Activated T-helper 1 cell treated with anti-CD3 and anti-CD28 coated beads, Interleukin-12 subunit alpha, Interleukin-12 subunit beta, Interleukin-2, Interleukin-4 antibody, amounts not matched to agents 30 ng/mL and 10 ng/mL and 1 ng/mL, durations not matched to agents 14 hours and 24 hours and 36 hours (primary cell): ENCODE measurements at regions of chr15 and their contacts with region 1.

Region 1: GRCh38 chr15:59917504-59918157 is 86.5 kb upstream of the FOXB1 start:
- DNase-seq: peak; percentile 67
- H3K4me3 Mint-ChIP-seq: no peak overlapping the region
- H3K27ac Mint-ChIP-seq: peak overlapping the region; percentile 1
- H3K4me1 Mint-ChIP-seq: peaks cover 27% of the 10 kb centered on the region
- H3K27me3 Mint-ChIP-seq: peaks cover 32% of the 10 kb centered on the region

Region 2: DNA sequence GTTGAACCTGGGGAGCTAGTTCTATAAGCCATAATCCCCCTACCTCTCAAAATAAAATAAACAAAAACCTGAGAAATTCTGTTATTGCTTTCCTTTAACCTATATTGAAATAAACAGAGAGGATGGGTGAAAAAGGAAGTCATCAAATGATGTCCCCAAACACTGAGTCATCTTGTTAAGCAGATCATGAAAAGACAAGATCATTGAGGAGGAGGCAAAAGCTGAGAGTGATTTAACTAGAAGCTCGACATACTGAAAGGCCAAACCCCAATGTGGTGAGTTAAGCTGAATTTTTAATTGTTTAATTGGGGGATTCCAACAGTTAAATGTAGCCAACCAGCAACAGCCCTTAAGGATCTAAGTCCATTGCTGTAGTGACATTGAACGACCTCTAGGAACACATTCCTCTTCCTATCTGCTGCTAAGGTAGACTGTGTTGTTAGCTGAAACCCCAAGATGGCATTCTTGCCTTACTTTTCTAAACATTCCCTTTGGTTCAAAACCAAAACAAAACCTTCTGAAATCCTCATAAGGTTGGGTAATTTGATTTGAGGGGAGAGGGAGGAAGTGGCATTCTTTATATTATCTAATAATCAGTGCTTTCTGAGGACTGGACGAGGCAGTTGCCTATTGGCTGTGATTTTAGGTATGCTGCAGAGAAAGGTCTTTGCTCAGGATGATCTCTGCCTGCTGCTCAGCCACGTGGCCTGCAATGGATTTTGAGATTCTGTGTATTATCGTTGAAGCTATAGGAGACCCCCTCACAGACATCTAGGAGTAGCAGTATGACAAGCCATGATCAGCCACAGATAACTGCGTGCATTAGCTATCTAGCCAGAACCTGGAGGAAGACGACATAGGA is 165.8 kb before region 1 on chr15:
- intact Hi-C with region 1: loop called (anchors 2 kb)
- DNase-seq: no peak
- H3K4me3 Mint-ChIP-seq: no peak overlapping the region
- H3K27ac Mint-ChIP-seq: no peak overlapping the region
- H3K4me1 Mint-ChIP-seq: peaks cover 5% of the 10 kb centered on the region
- H3K27me3 Mint-ChIP-seq: peaks cover 12% of the 10 kb centered on the region

Region 3: GRCh38 chr15:59997070-59997701 is 79.6 kb after region 1 on chr15:
- intact Hi-C with region 1: loop called (anchors 1 kb)
- DNase-seq: peak; percentile 63
- H3K4me3 Mint-ChIP-seq: peak overlapping the region; percentile 79
- H3K27ac Mint-ChIP-seq: peak overlapping the region; percentile 27
- H3K4me1 Mint-ChIP-seq: peaks cover 73% of the 10 kb centered on the region
- H3K27me3 Mint-ChIP-seq: peaks cover 86% of the 10 kb centered on the region

Region 4: DNA sequence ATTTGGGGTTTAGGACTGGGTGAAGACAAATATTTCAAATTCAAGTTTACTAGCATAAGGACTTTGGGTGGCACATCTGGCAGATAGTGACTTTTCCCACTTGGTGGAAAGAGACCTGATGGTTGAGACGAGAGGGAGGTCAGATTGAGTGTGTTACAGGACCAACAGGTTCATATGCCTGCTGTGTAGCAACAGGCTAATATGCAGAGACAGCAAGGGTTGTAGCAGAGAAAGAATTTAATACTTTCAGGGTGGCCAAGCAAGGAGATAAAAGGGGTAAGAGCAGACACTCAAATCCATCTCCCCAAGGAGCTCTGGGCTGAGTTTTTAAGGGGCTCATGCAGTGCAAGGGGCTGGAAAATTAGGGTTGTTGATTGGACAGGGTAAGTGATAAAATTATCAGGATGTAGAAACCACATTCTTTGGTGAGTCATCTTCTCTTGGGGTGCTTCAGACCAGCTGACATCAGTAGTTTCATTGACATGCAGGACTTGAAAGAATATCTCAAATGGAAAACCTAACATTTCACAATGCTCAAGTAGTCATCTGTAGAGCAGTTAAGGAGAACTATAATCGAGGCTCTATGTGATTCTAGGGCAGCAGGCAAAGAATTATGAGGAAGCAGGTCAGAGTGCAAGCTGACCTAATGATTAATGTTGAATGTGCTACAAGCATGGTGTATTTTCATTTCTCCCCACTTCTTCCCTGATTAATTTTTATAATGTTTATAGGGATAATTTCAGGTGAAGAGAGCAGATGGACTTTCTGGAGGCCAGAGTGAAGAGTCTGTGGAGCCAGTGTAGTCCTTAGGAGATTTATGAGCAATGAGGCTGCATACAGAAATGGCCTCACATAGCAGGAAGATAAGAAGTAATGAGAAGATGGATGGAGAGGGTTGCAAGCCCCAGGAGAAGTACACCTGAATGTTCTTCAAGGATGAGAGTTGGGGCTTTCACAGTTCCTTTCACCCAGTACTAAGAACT is 100.2 kb after region 1 on chr15:
- intact Hi-C with region 1: no loop called
- DNase-seq: no peak
- H3K4me3 Mint-ChIP-seq: peak overlapping the region; percentile 4
- H3K27ac Mint-ChIP-seq: peak overlapping the region; percentile 30
- H3K4me1 Mint-ChIP-seq: peaks cover 19% of the 10 kb centered on the region
- H3K27me3 Mint-ChIP-seq: peaks cover 14% of the 10 kb centered on the region

Region 5: DNA sequence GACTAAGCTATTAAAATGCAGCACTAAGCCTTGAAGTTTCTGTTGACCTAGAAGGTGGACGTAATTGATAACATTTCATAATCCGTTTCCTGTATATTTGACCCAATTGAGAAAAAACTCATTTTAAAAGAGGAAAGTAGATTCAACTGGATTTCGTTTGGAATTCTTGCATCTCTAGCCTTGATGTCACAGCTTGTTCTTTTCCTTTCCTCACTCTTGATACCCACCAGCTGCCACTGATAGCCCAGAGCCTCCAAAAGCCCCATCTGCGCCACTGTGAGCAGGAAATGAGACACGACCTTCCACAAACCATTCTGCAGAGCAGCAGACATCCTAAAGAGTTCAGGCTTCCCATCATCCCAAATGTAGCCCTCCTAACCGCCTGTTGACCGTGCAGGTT is 148.3 kb after region 1 on chr15:
- intact Hi-C with region 1: no loop called
- DNase-seq: no peak
- H3K4me3 Mint-ChIP-seq: no peak overlapping the region
- H3K27ac Mint-ChIP-seq: no peak overlapping the region
- H3K4me1 Mint-ChIP-seq: no peaks in the 10 kb centered on the region
- H3K27me3 Mint-ChIP-seq: peaks cover 17% of the 10 kb centered on the region

Region 6: GRCh38 chr15:60077581-60078359 is 160.1 kb after region 1 on chr15:
- intact Hi-C with region 1: loop called (anchors 1 kb)
- DNase-seq: peak; percentile 3
- H3K4me3 Mint-ChIP-seq: peak overlapping the region; percentile 4
- H3K27ac Mint-ChIP-seq: peak overlapping the region; percentile 75
- H3K4me1 Mint-ChIP-seq: peaks cover 49% of the 10 kb centered on the region
- H3K27me3 Mint-ChIP-seq: peaks cover 2% of the 10 kb centered on the region

Region 7: GRCh38 chr15:60255390-60255789 is 337.8 kb after region 1 on chr15:
- intact Hi-C with region 1: loop called (anchors 1 kb)
- DNase-seq: peak; percentile 26
- H3K4me3 Mint-ChIP-seq: no peak overlapping the region
- H3K27ac Mint-ChIP-seq: peak overlapping the region; percentile 7
- H3K4me1 Mint-ChIP-seq: peaks cover 9% of the 10 kb centered on the region
- H3K27me3 Mint-ChIP-seq: peaks cover 45% of the 10 kb centered on the region

Region 8: DNA sequence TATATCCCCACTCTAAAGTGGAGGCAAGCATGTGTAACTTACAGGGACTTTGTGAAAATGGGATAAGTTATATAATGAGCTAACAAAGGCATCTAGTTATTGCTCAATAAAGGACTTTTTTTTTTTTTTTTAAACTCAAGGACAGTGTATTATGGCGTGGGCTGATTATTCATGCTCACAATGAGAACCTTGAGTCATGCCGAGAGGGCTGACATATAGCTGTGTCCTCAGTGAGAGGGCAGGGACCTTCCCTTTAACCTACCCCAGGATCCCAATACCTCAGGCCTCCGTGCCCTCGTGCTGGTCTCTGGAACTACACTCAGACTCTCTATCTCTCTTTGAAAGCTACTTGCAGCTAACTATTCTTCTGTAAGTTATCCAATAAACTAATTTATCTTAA is 881.2 kb after region 1 on chr15:
- intact Hi-C with region 1: loop called (anchors 5 kb)
- DNase-seq: no peak
- H3K4me3 Mint-ChIP-seq: no peak overlapping the region
- H3K27ac Mint-ChIP-seq: peak overlapping the region; percentile 82
- H3K4me1 Mint-ChIP-seq: peaks cover 76% of the 10 kb centered on the region
- H3K27me3 Mint-ChIP-seq: no peaks in the 10 kb centered on the region